CD4-positive, alpha-beta T cell (primary cell): ENCODE measurements at regions of chr12 and their contacts with region 1.

Region 1: DNA sequence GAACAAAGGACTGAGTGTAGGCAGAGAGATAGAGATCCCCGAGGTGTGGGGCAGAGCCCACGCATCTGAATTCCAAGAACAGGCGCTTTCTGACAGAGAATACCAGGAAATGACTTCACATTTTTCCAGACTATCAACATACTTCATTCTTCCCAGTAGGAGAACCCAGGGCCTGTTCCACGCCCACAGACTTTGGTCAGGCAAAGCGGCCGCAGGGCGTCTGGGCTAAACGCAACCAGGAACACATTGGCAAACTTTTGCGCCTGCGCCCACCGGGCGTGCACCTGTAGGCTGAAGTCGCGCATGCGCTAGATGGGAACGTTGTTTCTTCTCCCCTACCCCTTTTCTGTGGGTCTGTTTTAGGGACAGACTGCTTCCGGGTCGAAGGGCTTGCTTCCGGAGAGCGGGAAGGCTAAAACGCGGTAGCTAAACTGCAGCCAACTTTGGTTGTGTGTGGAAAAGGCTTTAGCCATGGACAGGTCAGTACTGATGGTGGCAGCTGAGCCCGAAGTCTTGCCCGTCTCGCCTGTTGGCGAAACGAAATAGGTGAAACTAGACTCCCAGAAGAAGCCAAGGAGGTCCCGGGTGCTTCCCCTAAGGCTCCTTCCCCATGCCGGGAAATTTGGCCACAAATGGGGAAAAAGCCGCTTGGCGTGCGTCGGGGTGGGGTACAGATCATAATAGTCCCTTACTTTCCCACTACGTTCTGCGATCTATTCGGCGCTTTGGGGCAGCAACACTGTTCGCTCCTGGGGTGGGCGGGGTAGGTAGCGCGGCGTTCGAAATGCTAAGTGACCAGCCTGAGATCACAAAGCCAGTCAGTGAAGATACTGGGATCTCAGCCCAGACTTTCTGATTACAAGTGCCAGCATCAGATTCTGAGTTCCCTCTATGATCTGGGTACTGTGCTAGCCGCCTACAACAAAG is at the start of gene NUP107:
- DNase-seq: peak; percentile 94 to 99 (median 97)
- ATAC-seq: peak; percentile 94
- H3K4me3 ChIP-seq: peak within 1 kb of the TSS; percentile 82
- H3K4me3 Mint-ChIP-seq: peak within 1 kb of the TSS; percentile 100
- H3K27ac ChIP-seq: peak within 1 kb of the TSS; percentile 58 to 65
- H3K27ac Mint-ChIP-seq: peak within 1 kb of the TSS; percentile 98
- H3K4me1 ChIP-seq: peaks cover 11% of the 10 kb centered on the region
- H3K4me1 Mint-ChIP-seq: peaks cover 47% of the 10 kb centered on the region
- H3K27me3 ChIP-seq: no peaks in the 10 kb centered on the region
- H3K27me3 Mint-ChIP-seq: no peaks in the 10 kb centered on the region
- CTCF ChIP-seq: no peak
- total RNA-seq, gene NUP107: 37.2 to 38.7 TPM

Region 2: DNA sequence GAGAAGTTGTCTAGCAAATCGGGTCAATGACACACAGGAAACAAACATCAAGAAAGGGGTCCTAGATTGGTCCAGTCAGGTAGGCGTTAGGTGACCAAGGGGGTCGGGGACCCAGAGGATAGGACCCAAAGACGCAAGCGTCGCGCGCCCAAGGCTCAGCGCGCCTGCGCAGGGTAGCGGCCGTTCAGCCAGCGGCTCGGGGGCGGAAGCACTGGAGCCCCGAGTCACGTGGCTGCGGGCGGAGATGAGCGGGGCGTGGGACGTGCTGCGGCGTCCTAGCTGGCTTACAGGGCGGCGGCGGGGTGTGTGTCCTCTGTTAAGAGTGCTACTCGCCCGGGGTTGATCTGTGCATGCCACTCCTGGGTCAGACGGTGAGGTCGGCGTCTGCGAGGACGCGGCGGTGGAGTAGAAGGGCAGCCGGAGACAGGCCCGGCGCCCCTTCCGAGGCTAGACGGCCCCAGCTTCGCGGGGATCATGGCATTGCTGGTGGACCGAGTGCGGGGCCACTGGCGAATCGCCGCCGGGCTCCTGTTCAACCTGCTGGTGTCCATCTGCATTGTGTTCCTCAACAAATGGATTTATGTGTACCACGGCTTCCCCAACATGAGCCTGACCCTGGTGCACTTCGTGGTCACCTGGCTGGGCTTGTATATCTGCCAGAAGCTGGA is 59.2 kb after region 1 on chr12 and contains the start of gene SLC35E3:
- CTCF ChIA-PET with region 1: no interaction called
- POLR2A ChIA-PET with region 1: no interaction called
- intact Hi-C with region 1: loop called in 1 of 2 experiments (anchors 5 kb)
- DNase-seq: peak; percentile 81 to 95 (median 88)
- ATAC-seq: peak; percentile 98
- H3K4me3 ChIP-seq: peak within 1 kb of the TSS; percentile 90
- H3K4me3 Mint-ChIP-seq: peak within 1 kb of the TSS; percentile 93
- H3K27ac ChIP-seq: peak within 1 kb of the TSS; percentile 22 to 73
- H3K27ac Mint-ChIP-seq: peak within 1 kb of the TSS; percentile 95
- H3K4me1 ChIP-seq: peaks cover 19% of the 10 kb centered on the region
- H3K4me1 Mint-ChIP-seq: peaks cover 47% of the 10 kb centered on the region
- H3K27me3 ChIP-seq: no peaks in the 10 kb centered on the region
- H3K27me3 Mint-ChIP-seq: no peaks in the 10 kb centered on the region
- CTCF ChIP-seq: no peak
- total RNA-seq, gene SLC35E3: 3.5 to 6.1 TPM